ENCODE measurements at regions of chr4 and their contacts with region 1.

Region 1: GRCh38 chr4:188329521-188329920 is 190.3 kb downstream of the TRIML1 start:
- DNase-seq: peak; percentile 75 to 78
- H3K4me3 ChIP-seq: no peak overlapping the region
- H3K4me3 Mint-ChIP-seq: peak overlapping the region; percentile 47
- H3K27ac Mint-ChIP-seq: peak overlapping the region; percentile 93
- H3K4me1 ChIP-seq: peaks cover 41% of the 10 kb centered on the region
- H3K4me1 Mint-ChIP-seq: peaks cover 27% of the 10 kb centered on the region
- H3K27me3 ChIP-seq: no peaks in the 10 kb centered on the region
- H3K27me3 Mint-ChIP-seq: no peaks in the 10 kb centered on the region
- CTCF ChIP-seq: no peak

Region 2: GRCh38 chr4:187814737-187815465 is 514.6 kb before region 1 on chr4:
- CTCF ChIA-PET with region 1: no interaction called
- POLR2A ChIA-PET with region 1: no interaction called
- intact Hi-C with region 1: loop called (anchors 1 kb)
- DNase-seq: peak; percentile 82 to 84
- H3K4me3 ChIP-seq: peak overlapping the region; percentile 71
- H3K4me3 Mint-ChIP-seq: peak overlapping the region; percentile 94
- H3K27ac Mint-ChIP-seq: peak overlapping the region; percentile 98
- H3K4me1 ChIP-seq: 0 out of 2 replicates have a peak, but pooled peaks cover 8% of the 10 kb centered on the region
- H3K4me1 Mint-ChIP-seq: peaks cover 6% of the 10 kb centered on the region
- H3K27me3 ChIP-seq: no peaks in the 10 kb centered on the region
- H3K27me3 Mint-ChIP-seq: no peaks in the 10 kb centered on the region
- CTCF ChIP-seq: no peak

Region 3: DNA sequence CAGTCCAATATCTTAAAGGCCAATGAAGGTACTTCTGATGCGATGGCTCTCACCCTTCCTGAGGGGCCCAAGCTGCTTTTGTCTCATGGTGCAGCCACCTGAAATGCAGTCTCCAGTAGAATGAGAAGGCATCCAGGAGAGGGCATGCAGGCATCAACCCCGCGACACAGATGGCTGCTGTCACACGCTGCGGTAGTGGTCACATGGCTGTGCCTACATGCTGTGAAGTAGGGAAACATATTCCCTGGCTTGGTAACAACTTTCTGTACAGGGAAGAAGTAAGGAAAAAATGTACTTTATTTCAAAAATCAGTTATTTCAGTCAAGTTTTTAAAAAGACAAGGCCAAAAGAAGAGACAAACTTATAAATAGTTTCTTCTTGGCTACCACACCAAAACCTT is 50.3 kb before region 1 on chr4:
- CTCF ChIA-PET with region 1: no interaction called
- POLR2A ChIA-PET with region 1: no interaction called
- intact Hi-C with region 1: loop called (anchors 2 kb)
- DNase-seq: no peak
- H3K4me3 ChIP-seq: no peak overlapping the region
- H3K4me3 Mint-ChIP-seq: no peak overlapping the region
- H3K27ac Mint-ChIP-seq: no peak overlapping the region
- H3K4me1 ChIP-seq: peaks cover 1% of the 10 kb centered on the region; the same call in 1 of the 2 replicates
- H3K4me1 Mint-ChIP-seq: no peaks in the 10 kb centered on the region
- H3K27me3 ChIP-seq: no peaks in the 10 kb centered on the region
- H3K27me3 Mint-ChIP-seq: no peaks in the 10 kb centered on the region
- CTCF ChIP-seq: no peak

Region 4: DNA sequence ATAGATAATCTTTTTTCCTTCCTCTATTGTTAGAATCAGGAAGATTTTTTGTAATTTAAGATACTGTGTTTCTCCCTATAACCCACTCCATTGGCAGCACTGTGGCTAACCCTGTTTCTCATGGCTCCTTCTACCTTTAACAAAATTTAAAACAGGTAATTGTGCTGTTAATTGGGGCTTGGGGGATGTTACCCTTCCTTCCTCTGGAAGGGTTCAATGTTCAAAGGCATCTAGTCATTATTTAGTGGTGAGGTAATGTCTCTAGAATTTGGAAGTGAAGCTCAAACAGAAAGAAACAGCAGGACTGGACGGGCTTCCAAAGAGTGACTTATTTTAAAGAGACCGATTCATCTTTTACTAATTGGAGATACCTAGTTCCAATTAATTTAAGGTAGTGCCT is 23.8 kb before region 1 on chr4:
- CTCF ChIA-PET with region 1: no interaction called
- POLR2A ChIA-PET with region 1: no interaction called
- intact Hi-C with region 1: loop called (anchors 1 kb)
- DNase-seq: no peak
- H3K4me3 ChIP-seq: no peak overlapping the region
- H3K4me3 Mint-ChIP-seq: no peak overlapping the region
- H3K27ac Mint-ChIP-seq: no peak overlapping the region
- H3K4me1 ChIP-seq: peaks cover 5% of the 10 kb centered on the region; the same call in 1 of the 2 replicates
- H3K4me1 Mint-ChIP-seq: no peaks in the 10 kb centered on the region
- H3K27me3 ChIP-seq: no peaks in the 10 kb centered on the region
- H3K27me3 Mint-ChIP-seq: no peaks in the 10 kb centered on the region
- CTCF ChIP-seq: no peak

Region 5: DNA sequence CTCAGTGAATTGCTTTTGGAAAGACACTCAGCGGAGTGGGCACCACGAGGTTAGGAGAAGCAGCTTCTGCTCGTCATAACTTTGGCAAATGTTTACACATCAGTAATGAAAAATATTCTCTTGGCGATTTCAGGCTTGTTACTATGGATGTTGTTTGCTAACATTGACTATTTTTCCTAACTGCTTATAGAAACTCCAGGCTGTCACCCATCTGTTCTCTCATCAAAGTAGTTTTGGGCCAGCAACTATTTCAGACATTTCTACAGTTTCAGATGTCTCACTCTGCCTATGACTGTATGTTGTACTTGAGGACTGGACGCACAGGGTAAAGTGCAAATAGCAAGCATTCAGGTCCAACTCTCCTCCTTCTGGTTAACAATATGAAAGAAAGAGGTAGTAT is 156.4 kb after region 1 on chr4:
- CTCF ChIA-PET with region 1: no interaction called
- POLR2A ChIA-PET with region 1: no interaction called
- intact Hi-C with region 1: no loop called
- DNase-seq: no peak
- H3K4me3 ChIP-seq: no peak overlapping the region
- H3K4me3 Mint-ChIP-seq: no peak overlapping the region
- H3K27ac Mint-ChIP-seq: no peak overlapping the region
- H3K4me1 ChIP-seq: no peaks in the 10 kb centered on the region
- H3K4me1 Mint-ChIP-seq: no peaks in the 10 kb centered on the region
- H3K27me3 ChIP-seq: no peaks in the 10 kb centered on the region
- H3K27me3 Mint-ChIP-seq: no peaks in the 10 kb centered on the region
- CTCF ChIP-seq: no peak

Measured in Caco-2 (cell line).